Right cardiac atrium (tissue), 5 donors: ENCODE measurements at regions of chr15 and their contacts with region 1.

Region 1: DNA sequence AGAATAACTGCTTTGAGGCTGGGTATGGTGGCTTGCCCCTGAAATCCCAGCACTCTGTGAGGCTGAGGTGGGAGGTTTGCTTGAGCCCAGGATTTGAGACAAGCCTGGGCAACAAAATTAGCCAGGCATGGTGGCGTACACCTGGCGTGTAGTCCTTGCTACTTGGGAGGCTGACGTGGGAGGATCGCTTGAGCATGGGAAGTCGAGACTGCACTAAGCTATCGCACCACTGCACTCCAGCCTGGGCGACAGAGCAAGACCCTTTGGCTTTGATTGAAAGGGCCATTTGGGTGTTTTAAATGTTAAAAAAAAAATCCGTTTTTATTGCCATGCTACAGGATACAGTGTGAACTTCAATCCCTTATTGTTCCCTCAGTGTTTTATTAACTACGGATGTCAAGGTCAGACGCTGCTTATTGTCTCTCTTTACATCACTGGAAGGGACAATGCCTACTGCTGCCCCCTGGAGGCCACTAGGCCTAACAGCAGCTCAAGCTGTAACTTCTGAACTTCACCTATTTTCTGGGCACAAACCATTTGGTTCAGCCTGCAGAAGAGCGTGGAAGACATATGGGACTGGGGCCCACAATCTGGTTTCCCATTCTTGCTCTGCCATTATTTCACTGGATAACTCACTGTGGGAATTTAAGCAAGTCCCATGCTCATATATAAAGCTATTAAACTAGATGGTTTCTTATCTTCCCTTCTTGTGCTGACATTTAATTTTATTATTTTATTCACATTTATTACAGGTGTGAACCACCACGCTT is 15.3 kb upstream of the IREB2 start:
- DNase-seq: peak; percentile 58 to 80 (median 78)
- ATAC-seq: peak; percentile 62 to 74
- H3K4me3 ChIP-seq: no peak overlapping the region
- H3K27ac ChIP-seq: no peak overlapping the region
- H3K4me1 ChIP-seq: no peaks in the 10 kb centered on the region
- H3K27me3 ChIP-seq: no peaks in the 10 kb centered on the region

Region 2: DNA sequence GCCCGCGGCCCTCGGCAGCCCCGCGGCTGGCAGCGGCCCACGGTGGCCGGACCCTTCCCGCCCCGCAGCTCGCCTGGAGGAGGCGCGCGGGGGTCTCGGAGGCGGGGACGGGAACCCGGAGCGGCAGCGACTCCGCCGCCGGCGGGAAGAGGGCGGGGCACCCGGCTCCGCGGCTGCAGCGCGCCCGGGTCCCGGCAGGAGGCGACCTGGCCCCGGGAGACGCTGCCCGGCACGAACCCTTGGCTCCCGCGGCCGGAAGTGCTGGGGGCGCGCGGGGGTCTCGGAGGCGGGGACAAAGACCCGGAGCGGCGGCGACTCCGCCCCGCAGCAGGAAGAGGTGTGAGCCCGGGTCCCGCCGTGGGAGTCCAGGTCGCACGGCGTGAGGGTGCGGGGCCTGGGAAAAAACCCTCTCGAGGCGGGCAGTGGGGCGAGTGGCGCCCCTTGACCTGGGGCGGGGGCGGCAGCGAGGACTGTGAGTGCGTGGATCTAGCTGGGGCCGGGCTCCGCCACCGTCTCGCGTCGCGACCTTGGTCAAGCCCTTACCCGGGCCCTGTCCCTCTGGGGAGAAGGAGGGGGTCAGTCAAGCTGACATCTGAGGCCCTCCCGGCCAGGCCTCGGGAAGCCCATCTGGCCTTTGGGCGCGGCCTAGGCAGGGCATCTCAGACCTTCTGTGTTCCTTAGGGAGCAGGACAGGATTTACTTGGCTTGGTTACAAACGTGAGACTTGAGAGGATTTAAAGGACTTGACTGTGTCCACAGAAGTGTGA is 291.3 kb before region 1 on chr15 and contains the start of gene CIB2:
- intact Hi-C with region 1: loop called in 1 of 4 experiments (anchors 10 kb)
- DNase-seq: peak; percentile 76 to 92 (median 92)
- ATAC-seq: peak; percentile 90 to 91
- H3K4me3 ChIP-seq: peak within 1 kb of the TSS; percentile 64
- H3K27ac ChIP-seq: peak within 1 kb of the TSS; percentile 44
- H3K4me1 ChIP-seq: no peaks in the 10 kb centered on the region
- H3K27me3 ChIP-seq: no peaks in the 10 kb centered on the region
- total RNA-seq, gene CIB2: 59.0 to 76.3 (median 64.5) TPM

Region 3: DNA sequence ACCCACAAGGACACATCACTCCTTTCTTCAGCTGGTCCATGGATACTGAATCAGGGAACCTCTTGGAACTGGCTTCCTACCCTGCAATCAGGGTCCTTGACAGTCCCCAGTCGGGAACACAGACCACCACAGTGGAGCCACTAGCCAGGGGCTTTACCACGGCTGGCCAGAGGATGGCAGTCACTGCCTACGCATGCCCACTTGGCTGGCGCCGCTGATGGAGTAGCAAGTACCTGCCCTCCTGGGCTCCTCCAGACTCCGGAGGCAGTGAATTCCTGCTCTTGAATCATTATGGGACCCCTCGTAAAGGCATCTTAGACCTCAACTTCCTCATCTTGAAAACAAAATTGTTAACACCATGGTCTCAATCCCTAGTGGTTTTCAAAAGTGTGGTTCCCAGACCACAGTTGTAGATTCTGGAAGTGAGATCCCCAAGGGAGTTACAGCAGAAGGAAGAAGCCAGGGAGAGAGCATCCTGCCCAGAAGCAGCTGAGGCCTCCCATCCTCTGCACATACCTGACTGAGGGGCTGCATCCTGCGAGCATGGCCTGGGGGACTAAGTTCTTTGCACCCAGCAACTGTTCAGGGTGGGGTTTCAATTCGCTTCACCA is 114.2 kb before region 1 on chr15:
- intact Hi-C with region 1: loop called (anchors 2 to 5 kb)
- DNase-seq: peak; percentile 55 to 84 (median 83)
- ATAC-seq: peak; percentile 72 to 79
- H3K4me3 ChIP-seq: no peak overlapping the region
- H3K27ac ChIP-seq: no peak overlapping the region
- H3K4me1 ChIP-seq: no peaks in the 10 kb centered on the region
- H3K27me3 ChIP-seq: no peaks in the 10 kb centered on the region